ENCODE measurements at regions of chr3 and their contacts with region 1.

Region 1: DNA sequence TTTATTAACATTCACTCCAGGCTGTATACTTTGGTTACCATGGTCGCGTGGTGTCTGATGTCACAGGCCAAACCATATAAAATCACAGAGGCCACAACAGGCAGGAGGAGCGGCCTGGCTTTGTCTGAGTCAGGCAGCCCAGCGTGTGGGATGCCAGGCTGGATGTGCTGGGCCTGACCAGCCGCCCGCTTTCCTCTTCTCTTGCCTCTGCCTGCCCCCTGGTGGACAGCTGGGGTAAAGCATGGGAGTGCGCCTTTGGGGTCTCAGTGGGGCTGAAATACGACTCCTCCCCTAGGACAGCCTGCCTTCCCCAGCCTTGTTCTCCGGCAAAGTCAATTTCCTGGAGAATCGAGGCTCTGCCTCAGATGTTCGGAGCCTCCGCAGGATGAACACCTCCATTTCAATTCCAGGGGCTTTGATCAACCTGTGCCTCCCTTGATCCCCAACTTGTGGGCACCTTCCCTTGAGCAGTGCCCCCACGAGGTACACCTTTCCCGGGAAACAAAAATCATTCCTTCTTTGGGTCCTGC is 78.2 kb downstream of the CCNL1 start:
- DNase-seq: peak; percentile 98
- H3K4me3 ChIP-seq: no peak overlapping the region
- H3K27ac ChIP-seq: peak overlapping the region; percentile 97
- H3K4me1 ChIP-seq: peaks cover 41% of the 10 kb centered on the region
- H3K27me3 ChIP-seq: no peaks in the 10 kb centered on the region
- CTCF ChIP-seq: peak; percentile 85 to 99

Region 2: GRCh38 chr3:156151824-156152428 is 929.8 kb before region 1 on chr3:
- CTCF ChIA-PET with region 1: no interaction called
- dilution Hi-C with region 1: no loop called
- in situ Hi-C with region 1: no loop called
- intact Hi-C with region 1: loop called (anchors 2 kb)
- DNase-seq: peak; percentile 50
- H3K4me3 ChIP-seq: no peak overlapping the region
- H3K27ac ChIP-seq: no peak overlapping the region
- H3K4me1 ChIP-seq: no peaks in the 10 kb centered on the region
- H3K27me3 ChIP-seq: no peaks in the 10 kb centered on the region
- CTCF ChIP-seq: peak; percentile 79 to 87

Region 3: DNA sequence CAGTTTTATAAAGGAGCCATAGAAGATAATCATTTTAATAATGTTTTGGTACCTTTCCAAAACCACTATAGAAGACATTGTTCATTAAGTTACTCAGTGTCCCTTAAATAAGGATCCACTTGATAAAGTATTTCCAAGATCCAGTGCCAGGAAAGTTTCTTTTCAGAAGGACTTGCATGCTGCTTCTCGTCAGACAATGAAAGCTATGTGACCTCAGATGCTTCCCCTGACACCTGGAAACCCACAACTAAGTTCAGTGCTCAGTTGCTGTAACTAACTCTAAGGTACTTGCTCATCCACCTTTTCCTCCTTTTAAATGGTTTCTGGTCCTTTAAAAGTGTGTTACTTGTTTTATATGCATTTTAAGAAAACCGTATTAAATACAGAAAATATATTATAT is 534.1 kb before region 1 on chr3:
- CTCF ChIA-PET with region 1: no interaction called
- dilution Hi-C with region 1: no loop called
- in situ Hi-C with region 1: loop called (anchors 10 to 25 kb)
- intact Hi-C with region 1: no loop called
- DNase-seq: peak; percentile 83
- H3K4me3 ChIP-seq: peak overlapping the region in 2 of 3 experiments; percentile 8 to 24
- H3K27ac ChIP-seq: peak overlapping the region; percentile 89
- H3K4me1 ChIP-seq: peaks cover 63% of the 10 kb centered on the region
- H3K27me3 ChIP-seq: no peaks in the 10 kb centered on the region
- CTCF ChIP-seq: no peak

Region 4: DNA sequence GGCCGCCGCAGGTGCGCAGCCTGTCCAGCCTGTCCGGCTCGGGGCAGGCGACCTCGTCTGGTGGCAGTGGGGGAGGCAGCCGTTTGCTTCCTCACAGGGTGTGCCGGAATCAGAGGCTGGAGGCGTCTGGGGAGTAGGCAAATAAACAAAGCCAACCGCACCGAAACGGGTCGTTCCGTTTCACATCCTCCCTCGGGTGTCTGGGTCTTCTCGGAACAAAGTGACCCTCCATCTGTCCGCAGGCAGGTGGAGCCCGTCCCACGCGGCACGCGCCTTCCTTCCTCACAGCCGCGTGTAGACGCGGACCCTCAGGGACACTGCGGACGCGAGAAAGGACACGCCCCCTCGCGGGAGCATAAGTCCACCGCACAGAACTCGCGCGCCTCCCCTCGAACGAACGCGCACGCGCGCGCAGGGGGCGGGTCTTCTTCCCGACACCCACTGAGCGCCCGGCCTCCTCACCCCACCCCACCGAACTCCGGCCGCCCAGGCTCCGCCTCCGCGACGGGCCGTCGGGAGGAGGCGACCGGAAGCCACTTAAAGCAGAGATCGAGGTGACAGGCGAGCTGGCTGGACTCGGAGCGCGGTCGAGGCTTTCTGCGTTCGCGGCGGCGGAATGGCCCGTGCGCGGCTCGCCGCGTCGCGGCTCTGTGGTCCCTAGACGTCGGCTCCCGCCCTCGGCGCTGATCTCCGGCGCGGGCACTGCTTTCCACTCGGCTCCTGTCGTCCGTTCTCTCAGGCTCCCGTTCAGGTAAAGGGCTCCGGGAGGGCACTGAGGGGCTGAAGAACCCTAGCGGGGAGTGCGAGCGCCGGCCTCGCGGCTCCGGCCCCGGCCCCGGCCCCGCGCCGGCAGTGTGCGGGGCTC is 407.5 kb before region 1 on chr3 and contains the start of gene TIPARP:
- CTCF ChIA-PET with region 1: interaction called, 19 read pairs
- dilution Hi-C with region 1: no loop called
- in situ Hi-C with region 1: loop called (anchors 5 to 25 kb)
- intact Hi-C with region 1: loop called (anchors 1 kb)
- DNase-seq: peak; percentile 98
- H3K4me3 ChIP-seq: peak within 1 kb of the TSS; percentile 61 to 94 (median 76)
- H3K27ac ChIP-seq: peak within 1 kb of the TSS; percentile 99
- H3K4me1 ChIP-seq: peaks cover 22% of the 10 kb centered on the region
- H3K27me3 ChIP-seq: no peaks in the 10 kb centered on the region
- CTCF ChIP-seq: peak; percentile 5 to 44
- total RNA-seq, gene TIPARP: 171 to 229 TPM

Region 5: GRCh38 chr3:156751461-156752025 is 330.2 kb before region 1 on chr3:
- CTCF ChIA-PET with region 1: interaction called, 4 read pairs
- dilution Hi-C with region 1: no loop called
- in situ Hi-C with region 1: no loop called
- intact Hi-C with region 1: loop called (anchors 1 kb)
- DNase-seq: peak; percentile 87
- H3K4me3 ChIP-seq: peak overlapping the region in 1 of 3 experiments; percentile 2
- H3K27ac ChIP-seq: peak overlapping the region; percentile 94
- H3K4me1 ChIP-seq: peaks cover 27% of the 10 kb centered on the region
- H3K27me3 ChIP-seq: no peaks in the 10 kb centered on the region
- CTCF ChIP-seq: peak in 1 of 2 donors; percentile 29

Region 6: DNA sequence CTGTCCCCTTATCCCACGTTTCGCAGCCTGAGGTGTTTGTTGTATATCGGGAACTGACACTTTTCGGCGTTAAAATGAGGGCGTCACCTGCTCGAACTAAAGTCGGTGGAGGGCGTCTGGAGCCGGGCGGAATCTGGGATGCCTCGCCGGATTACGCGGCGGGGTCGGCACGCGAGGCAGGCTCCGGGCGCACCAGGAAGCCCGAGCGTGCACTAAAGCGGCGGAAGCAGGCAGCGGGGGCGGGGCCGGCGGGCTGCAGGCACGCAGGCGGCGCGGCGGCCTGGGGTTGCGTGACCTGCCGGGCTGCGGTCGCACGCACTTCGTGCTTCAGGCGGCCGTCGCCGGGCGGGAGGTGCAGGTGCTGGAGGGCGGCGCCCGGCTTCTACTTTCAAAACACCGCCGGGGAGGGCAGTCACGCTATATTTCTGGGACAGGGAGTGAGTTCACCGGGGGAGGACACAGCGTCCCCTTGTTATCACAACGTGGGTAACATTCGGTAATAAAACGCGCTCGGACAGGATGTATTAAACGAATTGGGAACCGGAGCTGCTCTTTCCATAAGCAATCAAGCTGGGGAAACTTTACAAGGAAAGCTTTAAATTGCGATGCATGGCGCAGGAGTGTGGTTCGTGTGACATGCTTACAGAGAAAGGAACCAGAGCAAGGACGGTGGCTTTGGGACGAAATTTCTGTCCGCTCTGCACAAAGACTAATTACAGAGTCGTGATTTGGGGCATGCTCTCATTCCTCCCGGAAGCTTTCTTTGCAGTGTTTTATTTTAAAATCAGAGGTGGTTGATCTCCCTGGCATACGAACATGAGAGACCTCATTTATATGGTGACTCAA is 264.7 kb before region 1 on chr3:
- CTCF ChIA-PET with region 1: no interaction called
- dilution Hi-C with region 1: loop called (anchors 5 kb)
- in situ Hi-C with region 1: loop called in 1 of 2 experiments (anchors 10 kb)
- intact Hi-C with region 1: loop called (anchors 1 kb)
- DNase-seq: peak; percentile 87
- H3K4me3 ChIP-seq: peak overlapping the region in 2 of 3 experiments; percentile 20 to 28
- H3K27ac ChIP-seq: peak overlapping the region; percentile 97
- H3K4me1 ChIP-seq: peaks cover 57% of the 10 kb centered on the region
- H3K27me3 ChIP-seq: no peaks in the 10 kb centered on the region
- CTCF ChIP-seq: peak in 1 of 2 donors; percentile 28

Region 7: GRCh38 chr3:157493627-157494550 is 412.1 kb after region 1 on chr3:
- CTCF ChIA-PET with region 1: no interaction called
- dilution Hi-C with region 1: no loop called
- in situ Hi-C with region 1: no loop called
- intact Hi-C with region 1: loop called (anchors 10 kb)
- DNase-seq: peak; percentile 30
- H3K4me3 ChIP-seq: no peak overlapping the region
- H3K27ac ChIP-seq: no peak overlapping the region
- H3K4me1 ChIP-seq: peaks cover 3% of the 10 kb centered on the region
- H3K27me3 ChIP-seq: no peaks in the 10 kb centered on the region
- CTCF ChIP-seq: peak; percentile 65 to 66

Measured in mammary epithelial cell (primary cell).